MCF 10A (cell line): ENCODE measurements at regions of chr3 and their contacts with region 1.

Region 1: GRCh38 chr3:141386611-141387111 is 18.4 kb downstream of the ZBTB38 start:
- DNase-seq: no peak
- H3K4me3 Mint-ChIP-seq: peak overlapping the region; percentile 28
- H3K27ac Mint-ChIP-seq: peak overlapping the region; percentile 73
- H3K4me1 Mint-ChIP-seq: peaks cover 46% of the 10 kb centered on the region
- H3K27me3 Mint-ChIP-seq: no peaks in the 10 kb centered on the region
- CTCF ChIP-seq: no peak

Region 2: DNA sequence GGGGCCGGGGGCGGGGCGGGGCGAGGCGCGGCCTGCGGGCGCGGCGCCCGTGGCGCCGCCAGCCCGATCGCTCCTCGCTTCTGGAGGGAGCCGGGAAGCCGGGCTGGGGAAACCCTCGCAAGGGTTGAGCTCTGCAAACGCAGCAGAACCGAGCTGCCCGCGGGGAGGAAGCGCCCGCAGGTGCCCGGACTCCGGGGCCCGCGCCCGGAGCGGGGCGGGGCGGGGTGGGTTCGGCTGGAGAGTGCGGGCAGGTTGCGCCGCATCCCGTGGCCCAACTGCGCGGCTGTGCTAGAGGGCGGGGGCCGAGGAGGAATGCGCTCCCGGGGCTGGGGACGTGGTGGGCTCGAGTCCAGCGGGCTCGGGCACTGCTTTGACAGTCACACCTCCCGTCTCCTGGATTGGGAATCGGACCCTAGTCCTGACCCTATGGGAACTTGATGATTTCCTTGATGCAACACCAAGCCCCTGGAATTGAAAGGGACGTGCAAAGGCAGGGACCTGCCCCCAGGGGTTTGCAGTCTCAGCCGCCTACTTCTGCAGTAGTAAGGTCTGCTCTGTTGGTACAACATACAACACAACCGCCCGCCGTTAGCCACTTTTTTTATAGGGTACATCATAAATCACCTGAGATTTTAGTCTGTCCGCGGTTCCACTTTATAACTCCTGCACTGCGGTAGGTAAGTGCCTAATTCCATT is 16.0 kb after region 1 on chr3:
- CTCF ChIA-PET with region 1: interaction called, 4 read pairs
- POLR2A ChIA-PET with region 1: interaction called, 24 read pairs
- intact Hi-C with region 1: no loop called
- DNase-seq: peak; percentile 60
- H3K4me3 Mint-ChIP-seq: peak overlapping the region; percentile 69
- H3K27ac Mint-ChIP-seq: peak overlapping the region; percentile 94
- H3K4me1 Mint-ChIP-seq: peaks cover 56% of the 10 kb centered on the region
- H3K27me3 Mint-ChIP-seq: no peaks in the 10 kb centered on the region
- CTCF ChIP-seq: no peak

Region 3: GRCh38 chr3:141796081-141796888 is 409.6 kb after region 1 on chr3:
- CTCF ChIA-PET with region 1: no interaction called
- POLR2A ChIA-PET with region 1: no interaction called
- intact Hi-C with region 1: no loop called
- DNase-seq: no peak
- H3K4me3 Mint-ChIP-seq: no peak overlapping the region
- H3K27ac Mint-ChIP-seq: no peak overlapping the region
- H3K4me1 Mint-ChIP-seq: no peaks in the 10 kb centered on the region
- H3K27me3 Mint-ChIP-seq: no peaks in the 10 kb centered on the region
- CTCF ChIP-seq: no peak